ENCODE measurements at regions of chr9 and their contacts with region 1.

Region 1: GRCh38 chr9:120916588-120916987 is 10.0 kb downstream of the TRAF1 start:
- DNase-seq: peak; percentile 87
- H3K4me3 ChIP-seq: no peak overlapping the region
- H3K27ac ChIP-seq: peak overlapping the region; percentile 50 to 75
- H3K4me1 ChIP-seq: no peaks in the 10 kb centered on the region
- H3K27me3 ChIP-seq: no peaks in the 10 kb centered on the region
- CTCF ChIP-seq: peak in 3 of 4 experiments; percentile 31 to 56 (median 33)
- POLR2A ChIP-seq: no peak

Region 2: GRCh38 chr9:120891884-120892747 is 24.5 kb before region 1 on chr9:
- intact Hi-C with region 1: loop called (anchors 2 kb)
- DNase-seq: peak; percentile 64
- H3K4me3 ChIP-seq: no peak overlapping the region
- H3K27ac ChIP-seq: peak overlapping the region; percentile 49 to 56
- H3K4me1 ChIP-seq: peaks cover 7% of the 10 kb centered on the region
- H3K27me3 ChIP-seq: no peaks in the 10 kb centered on the region
- CTCF ChIP-seq: no peak
- POLR2A ChIP-seq: no peak

Region 3: GRCh38 chr9:121156263-121156731 is 239.7 kb after region 1 on chr9:
- intact Hi-C with region 1: no loop called
- DNase-seq: peak; percentile 46
- H3K4me3 ChIP-seq: no peak overlapping the region
- H3K27ac ChIP-seq: no peak overlapping the region
- H3K4me1 ChIP-seq: no peaks in the 10 kb centered on the region
- H3K27me3 ChIP-seq: no peaks in the 10 kb centered on the region
- CTCF ChIP-seq: no peak
- POLR2A ChIP-seq: no peak

Measured in prostate gland (tissue), 2 donors.